MCF 10A (cell line): ENCODE measurements at regions of chr3 and their contacts with region 1.

Region 1: DNA sequence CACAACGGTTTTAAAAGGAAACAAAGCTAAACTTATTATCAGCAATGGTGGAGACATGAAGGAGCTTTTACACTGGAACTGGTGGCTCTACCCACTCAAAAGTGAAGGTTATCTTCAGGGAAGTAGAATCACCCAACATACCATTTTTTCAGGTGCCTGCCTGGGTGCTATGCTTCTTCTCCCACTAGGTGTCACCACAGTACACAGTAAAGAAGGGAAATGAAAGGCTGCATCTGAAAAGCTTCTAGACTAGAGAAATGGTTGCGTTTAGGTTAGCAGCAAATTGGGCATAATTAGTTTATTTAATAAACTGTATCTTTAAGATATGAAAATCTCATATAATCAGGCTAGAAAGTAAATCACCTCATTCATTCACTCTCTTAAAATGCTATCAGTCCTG is 47.0 kb upstream of the SELENOK start:
- DNase-seq: peak; percentile 60
- H3K4me3 Mint-ChIP-seq: no peak overlapping the region
- H3K27ac Mint-ChIP-seq: no peak overlapping the region
- H3K4me1 Mint-ChIP-seq: peaks cover 5% of the 10 kb centered on the region
- H3K27me3 Mint-ChIP-seq: no peaks in the 10 kb centered on the region
- CTCF ChIP-seq: peak; percentile 86

Region 2: DNA sequence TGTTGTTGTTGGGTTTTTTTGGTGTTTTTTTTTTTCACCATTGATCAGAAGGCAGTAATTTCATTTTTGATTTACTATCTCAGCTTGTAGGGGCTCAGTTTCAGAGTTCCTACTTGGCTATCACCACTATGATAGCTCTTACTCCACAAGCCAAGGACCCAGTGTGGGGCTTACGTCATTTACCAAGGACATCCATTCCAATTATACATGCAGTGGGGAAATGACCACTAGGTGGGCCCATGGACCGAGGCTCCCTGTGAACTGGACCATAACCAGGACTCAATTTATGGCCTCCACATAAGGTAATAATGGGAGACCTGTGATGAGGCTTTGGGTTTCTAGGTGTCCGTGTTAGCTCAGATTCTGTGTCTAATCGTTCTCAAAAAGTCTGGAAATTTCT is 511.7 kb before region 1 on chr3:
- CTCF ChIA-PET with region 1: no interaction called
- POLR2A ChIA-PET with region 1: no interaction called
- intact Hi-C with region 1: no loop called
- DNase-seq: no peak
- H3K4me3 Mint-ChIP-seq: no peak overlapping the region
- H3K27ac Mint-ChIP-seq: no peak overlapping the region
- H3K4me1 Mint-ChIP-seq: no peaks in the 10 kb centered on the region
- H3K27me3 Mint-ChIP-seq: peaks cover 32% of the 10 kb centered on the region
- CTCF ChIP-seq: no peak

Region 3: GRCh38 chr3:53956586-53956985 is 17.9 kb after region 1 on chr3:
- CTCF ChIA-PET with region 1: interaction called, 12 read pairs
- POLR2A ChIA-PET with region 1: no interaction called
- intact Hi-C with region 1: no loop called
- DNase-seq: no peak
- H3K4me3 Mint-ChIP-seq: no peak overlapping the region
- H3K27ac Mint-ChIP-seq: no peak overlapping the region
- H3K4me1 Mint-ChIP-seq: no peaks in the 10 kb centered on the region
- H3K27me3 Mint-ChIP-seq: no peaks in the 10 kb centered on the region
- CTCF ChIP-seq: no peak

Region 4: DNA sequence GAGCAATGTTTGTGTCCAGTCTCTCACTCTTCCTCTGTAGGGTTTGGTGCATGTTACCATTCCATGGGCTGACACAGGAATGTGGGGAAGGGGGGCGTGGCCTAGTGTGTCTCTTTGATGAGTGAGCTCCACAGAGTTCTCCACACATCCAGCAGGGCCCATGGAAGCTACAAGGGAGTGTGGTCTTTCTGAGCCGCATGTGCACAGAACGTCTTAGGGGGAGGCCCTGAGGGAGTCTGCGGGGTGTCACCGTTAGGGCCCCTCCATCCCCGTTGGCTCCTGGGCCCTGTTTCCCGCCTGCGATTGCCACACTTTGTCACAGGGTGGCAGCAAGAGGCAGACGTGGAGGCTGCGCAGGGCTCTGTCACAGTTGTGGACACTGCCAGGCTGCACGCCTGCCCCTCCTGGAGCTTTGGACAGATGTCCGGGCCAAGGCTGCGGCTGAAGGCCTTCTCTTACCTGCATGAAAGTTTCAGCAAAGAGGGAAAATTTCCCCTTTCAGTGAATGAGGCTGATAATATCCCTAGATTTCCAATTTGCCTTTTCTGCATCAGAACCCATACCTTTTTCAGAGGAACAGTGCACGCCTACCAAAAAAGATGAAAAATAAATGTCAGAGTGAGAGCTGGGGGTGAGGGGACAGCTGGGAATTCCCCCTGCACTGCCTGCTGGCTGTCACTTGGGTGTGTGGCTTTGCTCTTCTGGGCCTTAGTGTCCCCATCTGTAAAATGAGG is 208.0 kb after region 1 on chr3:
- CTCF ChIA-PET with region 1: interaction called, 35 read pairs
- POLR2A ChIA-PET with region 1: interaction called, 4 read pairs
- intact Hi-C with region 1: loop called (anchors 2 kb)
- DNase-seq: peak; percentile 40
- H3K4me3 Mint-ChIP-seq: no peak overlapping the region
- H3K27ac Mint-ChIP-seq: no peak overlapping the region
- H3K4me1 Mint-ChIP-seq: no peaks in the 10 kb centered on the region
- H3K27me3 Mint-ChIP-seq: peaks cover 40% of the 10 kb centered on the region
- CTCF ChIP-seq: peak; percentile 63

Region 5: GRCh38 chr3:54374214-54374855 is 435.7 kb after region 1 on chr3:
- CTCF ChIA-PET with region 1: interaction called, 51 read pairs
- POLR2A ChIA-PET with region 1: interaction called, 4 read pairs
- intact Hi-C with region 1: loop called (anchors 1 kb)
- DNase-seq: peak; percentile 51
- H3K4me3 Mint-ChIP-seq: no peak overlapping the region
- H3K27ac Mint-ChIP-seq: no peak overlapping the region
- H3K4me1 Mint-ChIP-seq: no peaks in the 10 kb centered on the region
- H3K27me3 Mint-ChIP-seq: peaks cover 15% of the 10 kb centered on the region
- CTCF ChIP-seq: peak; percentile 55

Region 6: DNA sequence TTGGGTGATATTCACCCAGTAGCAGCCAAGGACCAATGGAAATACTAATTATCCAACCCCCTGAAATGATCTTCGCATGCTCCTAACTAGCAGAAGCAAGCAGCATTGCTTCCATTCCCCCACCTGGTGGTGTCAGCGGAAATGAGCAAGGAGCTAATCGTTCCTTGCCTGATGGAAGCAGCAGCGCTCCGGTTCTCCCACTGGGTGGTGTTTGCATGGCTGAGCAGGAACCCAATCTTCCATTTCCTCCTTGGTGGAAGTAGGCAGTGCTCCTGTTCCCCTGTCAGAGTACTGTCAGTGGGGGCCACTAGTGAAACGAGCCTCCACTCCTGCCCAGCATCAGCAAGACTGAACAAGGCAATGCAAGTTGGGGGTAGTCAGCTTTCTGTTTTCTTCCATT is 495.2 kb after region 1 on chr3:
- CTCF ChIA-PET with region 1: interaction called, 24 read pairs
- POLR2A ChIA-PET with region 1: no interaction called
- intact Hi-C with region 1: loop called (anchors 5 kb)
- DNase-seq: peak; percentile 34
- H3K4me3 Mint-ChIP-seq: no peak overlapping the region
- H3K27ac Mint-ChIP-seq: no peak overlapping the region
- H3K4me1 Mint-ChIP-seq: no peaks in the 10 kb centered on the region
- H3K27me3 Mint-ChIP-seq: peaks cover 4% of the 10 kb centered on the region
- CTCF ChIP-seq: no peak